AG04450 (cell line): ENCODE measurements at regions of chr2 and their contacts with region 1.

Region 1: GRCh38 chr2:231632559-231633142 is 40.0 kb downstream of the TEX44 start:
- DNase-seq: peak; percentile 77
- H3K4me3 ChIP-seq: no peak overlapping the region
- H3K27ac ChIP-seq: peak overlapping the region; percentile 84
- H3K27me3 ChIP-seq: no peaks in the 10 kb centered on the region
- CTCF ChIP-seq: no peak

Region 2: DNA sequence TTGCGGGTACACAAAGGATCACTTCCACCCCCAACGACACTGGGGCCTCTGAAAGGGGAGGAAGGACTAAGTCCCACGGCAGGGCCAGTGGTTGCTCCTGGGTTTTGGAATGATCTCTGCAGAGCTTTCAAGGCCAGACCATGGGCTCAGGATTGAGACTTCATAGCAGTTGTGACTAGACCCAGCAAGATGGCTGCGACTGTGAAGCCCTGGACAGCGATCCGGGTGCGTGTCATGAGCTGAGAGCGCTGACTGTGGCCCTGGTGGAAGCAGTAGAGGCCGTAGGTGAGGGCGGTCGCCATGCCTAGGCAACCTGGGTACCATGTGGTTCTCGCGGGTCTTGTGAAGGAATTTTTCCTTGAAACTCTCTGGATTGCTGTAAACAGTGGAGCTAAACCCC is 195.7 kb before region 1 on chr2:
- CTCF ChIA-PET with region 1: no interaction called
- POLR2A ChIA-PET with region 1: no interaction called
- DNase-seq: no peak
- H3K4me3 ChIP-seq: no peak overlapping the region
- H3K27ac ChIP-seq: no peak overlapping the region
- H3K27me3 ChIP-seq: no peaks in the 10 kb centered on the region
- CTCF ChIP-seq: no peak

Region 3: DNA sequence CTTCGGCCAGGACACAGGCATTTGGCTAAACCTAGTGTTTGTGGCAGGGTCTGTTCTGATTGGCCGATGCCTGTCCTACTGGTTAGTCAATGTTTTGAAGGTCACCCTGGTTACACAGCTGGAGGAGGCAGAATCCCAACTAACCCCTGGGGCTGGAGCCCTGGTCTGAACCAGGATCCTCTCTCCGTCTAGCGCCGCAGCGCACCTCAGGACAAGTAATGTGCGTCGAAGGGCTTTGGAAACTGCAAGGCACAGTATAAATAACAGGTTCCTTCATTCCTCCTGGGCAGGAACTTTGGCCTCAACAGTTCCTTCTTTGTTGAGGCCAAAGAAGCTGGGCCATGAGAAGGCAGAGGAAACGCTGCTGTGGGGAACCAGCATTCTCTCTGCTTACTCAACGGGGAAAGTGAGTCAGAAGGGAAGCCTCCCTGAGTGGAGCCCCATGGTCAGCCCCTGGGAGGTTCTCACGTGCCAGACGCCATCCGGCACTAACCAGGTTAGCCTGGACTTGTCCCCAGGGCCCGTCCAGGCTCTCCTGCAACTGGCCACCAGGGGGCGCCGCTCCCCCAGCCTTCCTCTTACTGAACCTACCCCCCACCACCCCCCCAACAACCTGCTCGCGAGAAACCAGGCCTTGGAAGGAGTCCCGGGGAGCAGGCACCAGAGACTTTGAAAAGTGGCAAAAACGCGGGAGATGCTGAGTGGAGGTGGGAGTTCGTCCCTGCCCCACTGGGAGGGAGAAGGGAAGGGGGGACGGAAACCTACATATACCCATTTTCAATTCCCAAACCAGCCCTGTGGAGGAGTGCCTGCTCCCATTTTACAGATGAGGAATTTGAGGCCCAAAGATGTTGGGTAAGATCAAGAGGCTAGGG is 20.2 kb before region 1 on chr2:
- CTCF ChIA-PET with region 1: interaction called, 22 read pairs
- POLR2A ChIA-PET with region 1: interaction called, 7 read pairs
- DNase-seq: peak; percentile 84
- H3K4me3 ChIP-seq: no peak overlapping the region
- H3K27ac ChIP-seq: peak overlapping the region; percentile 96
- H3K27me3 ChIP-seq: no peaks in the 10 kb centered on the region
- CTCF ChIP-seq: peak; percentile 93

Region 4: DNA sequence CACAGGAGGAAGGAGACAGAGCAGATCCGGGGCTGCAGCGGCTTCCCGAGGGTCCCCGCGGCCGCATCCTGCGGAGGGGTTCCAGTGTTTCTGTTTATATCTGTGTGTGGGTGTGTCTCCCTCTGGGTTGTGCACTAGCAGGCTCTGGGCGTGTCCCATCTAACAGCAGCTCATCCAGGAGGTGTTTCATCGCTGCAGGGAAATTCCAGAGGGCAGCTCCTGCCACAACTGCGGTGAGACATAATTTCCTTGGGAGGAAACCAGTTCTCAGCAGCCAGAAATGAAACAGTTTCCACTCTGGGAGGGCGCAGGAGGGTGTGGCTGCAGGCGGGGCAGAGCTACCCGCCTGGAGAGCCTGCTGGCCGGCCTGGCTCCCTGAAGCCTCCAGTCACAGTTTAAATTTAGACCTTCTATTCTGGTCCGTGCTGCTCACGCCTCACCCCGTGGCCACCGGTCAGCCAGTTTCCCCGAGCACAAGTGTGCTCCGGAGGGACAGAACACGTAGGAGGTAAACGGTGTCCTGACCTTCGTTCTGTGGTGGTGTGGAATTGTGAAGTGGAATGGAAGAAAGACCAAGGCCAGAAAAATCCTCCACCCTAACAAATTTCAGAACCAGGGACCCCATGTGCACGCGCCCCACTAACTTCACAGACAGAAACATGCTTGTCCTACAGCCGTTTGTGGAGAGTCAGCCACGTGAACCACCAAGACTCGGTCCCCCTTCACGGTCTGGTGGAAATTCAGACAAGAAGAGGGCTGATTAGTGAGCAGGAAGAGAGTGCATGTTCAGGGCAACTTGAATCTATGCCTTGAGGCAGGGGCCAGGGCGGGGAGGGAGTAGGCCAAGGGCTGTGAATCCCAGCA is 10.2 kb after region 1 on chr2:
- CTCF ChIA-PET with region 1: interaction called, 8 read pairs
- POLR2A ChIA-PET with region 1: interaction called, 13 read pairs
- DNase-seq: peak; percentile 63
- H3K4me3 ChIP-seq: peak overlapping the region; percentile 36
- H3K27ac ChIP-seq: peak overlapping the region; percentile 84
- H3K27me3 ChIP-seq: no peaks in the 10 kb centered on the region
- CTCF ChIP-seq: no peak

Region 5: GRCh38 chr2:233165895-233166661 is 1533.4 kb after region 1 on chr2:
- CTCF ChIA-PET with region 1: no interaction called
- POLR2A ChIA-PET with region 1: no interaction called
- DNase-seq: no peak
- H3K4me3 ChIP-seq: no peak overlapping the region
- H3K27ac ChIP-seq: no peak overlapping the region
- H3K27me3 ChIP-seq: peaks cover 19% of the 10 kb centered on the region
- CTCF ChIP-seq: no peak